CD8-positive, alpha-beta T cell (primary cell): ENCODE measurements at regions of chr4 and their contacts with region 1.

Region 1: GRCh38 chr4:3193531-3194203 is 55.3 kb upstream of the MSANTD1 start:
- DNase-seq: peak in 3 of 9 experiments; percentile 37 to 61 (median 38)
- ATAC-seq: peak; percentile 27
- H3K4me3 ChIP-seq: no peak overlapping the region
- H3K4me3 Mint-ChIP-seq: no peak overlapping the region
- H3K27ac ChIP-seq: peak overlapping the region in 1 of 2 experiments; percentile 91
- H3K27ac Mint-ChIP-seq: no peak overlapping the region
- H3K4me1 ChIP-seq: peaks cover 49% of the 10 kb centered on the region
- H3K4me1 Mint-ChIP-seq: peaks cover 68% of the 10 kb centered on the region
- H3K27me3 ChIP-seq: no peaks in the 10 kb centered on the region
- H3K27me3 Mint-ChIP-seq: no peaks in the 10 kb centered on the region
- CTCF ChIP-seq: peak; percentile 70

Region 2: GRCh38 chr4:3243136-3243780 is 49.6 kb after region 1 on chr4:
- CTCF ChIA-PET with region 1: interaction called, 13 read pairs
- POLR2A ChIA-PET with region 1: no interaction called
- intact Hi-C with region 1: no loop called
- DNase-seq: no peak
- ATAC-seq: no peak
- H3K4me3 ChIP-seq: no peak overlapping the region
- H3K4me3 Mint-ChIP-seq: no peak overlapping the region
- H3K27ac ChIP-seq: no peak overlapping the region
- H3K27ac Mint-ChIP-seq: peak overlapping the region; percentile 66
- H3K4me1 ChIP-seq: peaks cover 5% of the 10 kb centered on the region
- H3K4me1 Mint-ChIP-seq: peaks cover 13% of the 10 kb centered on the region
- H3K27me3 ChIP-seq: no peaks in the 10 kb centered on the region
- H3K27me3 Mint-ChIP-seq: no peaks in the 10 kb centered on the region
- CTCF ChIP-seq: no peak

Region 3: DNA sequence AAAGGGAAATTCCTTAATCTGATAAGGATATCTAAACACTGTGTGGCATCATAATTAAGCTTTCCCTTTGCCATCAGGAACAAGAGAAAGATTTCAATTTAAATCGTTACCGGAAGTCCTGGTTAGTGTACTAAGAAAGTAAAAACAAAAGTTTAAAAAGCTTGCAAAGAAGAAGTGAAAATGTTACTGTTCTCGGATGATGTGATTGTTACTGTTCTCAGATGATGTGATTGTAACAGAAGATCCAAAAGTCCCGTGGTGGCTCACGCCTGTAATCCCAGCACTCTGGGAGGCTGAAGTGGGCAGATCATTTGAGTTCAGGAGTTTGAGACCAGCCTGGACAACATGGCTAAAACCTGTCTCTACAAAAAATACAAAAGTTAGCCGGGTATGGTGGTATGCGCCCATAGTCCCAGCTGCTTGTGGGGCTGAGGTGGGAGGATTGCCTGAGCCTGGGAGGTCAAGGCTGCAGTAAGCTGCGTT is 161.6 kb after region 1 on chr4:
- CTCF ChIA-PET with region 1: no interaction called
- POLR2A ChIA-PET with region 1: no interaction called
- intact Hi-C with region 1: loop called in 1 of 2 experiments (anchors 2 kb)
- DNase-seq: no peak
- ATAC-seq: no peak
- H3K4me3 ChIP-seq: no peak overlapping the region
- H3K4me3 Mint-ChIP-seq: no peak overlapping the region
- H3K27ac ChIP-seq: no peak overlapping the region
- H3K27ac Mint-ChIP-seq: no peak overlapping the region
- H3K4me1 ChIP-seq: no peaks in the 10 kb centered on the region
- H3K4me1 Mint-ChIP-seq: peaks cover 15% of the 10 kb centered on the region
- H3K27me3 ChIP-seq: no peaks in the 10 kb centered on the region
- H3K27me3 Mint-ChIP-seq: no peaks in the 10 kb centered on the region
- CTCF ChIP-seq: no peak

Region 4: GRCh38 chr4:3442959-3443749 is 249.5 kb after region 1 on chr4:
- CTCF ChIA-PET with region 1: interaction called, 48 read pairs
- POLR2A ChIA-PET with region 1: no interaction called
- intact Hi-C with region 1: loop called in 1 of 2 experiments (anchors 1 kb)
- DNase-seq: peak; percentile 46 to 83 (median 64)
- ATAC-seq: peak; percentile 91
- H3K4me3 ChIP-seq: no peak overlapping the region
- H3K4me3 Mint-ChIP-seq: no peak overlapping the region
- H3K27ac ChIP-seq: no peak overlapping the region
- H3K27ac Mint-ChIP-seq: no peak overlapping the region
- H3K4me1 ChIP-seq: no peaks in the 10 kb centered on the region
- H3K4me1 Mint-ChIP-seq: no peaks in the 10 kb centered on the region
- H3K27me3 ChIP-seq: no peaks in the 10 kb centered on the region
- H3K27me3 Mint-ChIP-seq: no peaks in the 10 kb centered on the region
- CTCF ChIP-seq: peak; percentile 89

Region 5: GRCh38 chr4:3480528-3481112 is 287.0 kb after region 1 on chr4:
- CTCF ChIA-PET with region 1: interaction called, 15 read pairs
- POLR2A ChIA-PET with region 1: interaction called, 3 read pairs
- intact Hi-C with region 1: loop called (anchors 1 to 2 kb)
- DNase-seq: peak; percentile 58 to 84 (median 68)
- ATAC-seq: peak; percentile 85
- H3K4me3 ChIP-seq: no peak overlapping the region
- H3K4me3 Mint-ChIP-seq: no peak overlapping the region
- H3K27ac ChIP-seq: no peak overlapping the region
- H3K27ac Mint-ChIP-seq: no peak overlapping the region
- H3K4me1 ChIP-seq: peaks cover 13% of the 10 kb centered on the region
- H3K4me1 Mint-ChIP-seq: peaks cover 2% of the 10 kb centered on the region
- H3K27me3 ChIP-seq: peaks cover 12 to 13% of the 10 kb centered on the region in 2 experiments
- H3K27me3 Mint-ChIP-seq: peaks cover 13% of the 10 kb centered on the region
- CTCF ChIP-seq: peak; percentile 77

Region 6: DNA sequence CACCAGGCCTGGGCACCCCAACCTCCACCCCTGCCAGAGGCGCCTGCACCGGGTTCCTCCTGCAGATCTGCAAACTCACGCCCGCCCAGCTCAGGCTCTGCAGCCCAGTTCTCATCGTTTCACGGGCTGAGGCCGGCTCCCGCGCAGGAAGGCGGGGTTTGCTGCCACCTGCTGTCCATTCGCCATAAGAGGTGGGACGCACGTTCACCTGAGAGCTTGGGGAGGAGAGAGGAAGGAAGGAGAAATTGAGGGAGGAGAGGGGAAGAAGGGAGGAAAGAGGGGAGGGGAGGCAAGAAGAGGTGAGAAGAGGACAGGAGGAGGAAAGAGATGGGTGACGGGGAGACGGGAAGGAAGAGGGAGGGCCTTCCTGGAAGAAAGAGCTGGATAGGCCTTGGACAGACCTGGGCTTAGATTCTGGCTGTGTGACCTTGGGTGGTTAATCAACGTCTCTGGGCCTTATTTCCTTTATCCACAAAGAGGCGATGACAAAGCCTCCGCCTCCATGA is 687.0 kb after region 1 on chr4:
- CTCF ChIA-PET with region 1: no interaction called
- POLR2A ChIA-PET with region 1: no interaction called
- intact Hi-C with region 1: loop called in 1 of 2 experiments (anchors 5 kb)
- DNase-seq: peak; percentile 45 to 83 (median 68)
- ATAC-seq: peak; percentile 78
- H3K4me3 ChIP-seq: peak overlapping the region; percentile 24 to 28
- H3K4me3 Mint-ChIP-seq: peak overlapping the region; percentile 56
- H3K27ac ChIP-seq: no peak overlapping the region
- H3K27ac Mint-ChIP-seq: no peak overlapping the region
- H3K4me1 ChIP-seq: peaks cover 15% of the 10 kb centered on the region
- H3K4me1 Mint-ChIP-seq: peaks cover 17% of the 10 kb centered on the region
- H3K27me3 ChIP-seq: no peaks in the 10 kb centered on the region
- H3K27me3 Mint-ChIP-seq: peaks cover 42% of the 10 kb centered on the region
- CTCF ChIP-seq: peak; percentile 59